SK-N-SH (cell line): ENCODE measurements at regions of chr4 and their contacts with region 1.

Region 1: DNA sequence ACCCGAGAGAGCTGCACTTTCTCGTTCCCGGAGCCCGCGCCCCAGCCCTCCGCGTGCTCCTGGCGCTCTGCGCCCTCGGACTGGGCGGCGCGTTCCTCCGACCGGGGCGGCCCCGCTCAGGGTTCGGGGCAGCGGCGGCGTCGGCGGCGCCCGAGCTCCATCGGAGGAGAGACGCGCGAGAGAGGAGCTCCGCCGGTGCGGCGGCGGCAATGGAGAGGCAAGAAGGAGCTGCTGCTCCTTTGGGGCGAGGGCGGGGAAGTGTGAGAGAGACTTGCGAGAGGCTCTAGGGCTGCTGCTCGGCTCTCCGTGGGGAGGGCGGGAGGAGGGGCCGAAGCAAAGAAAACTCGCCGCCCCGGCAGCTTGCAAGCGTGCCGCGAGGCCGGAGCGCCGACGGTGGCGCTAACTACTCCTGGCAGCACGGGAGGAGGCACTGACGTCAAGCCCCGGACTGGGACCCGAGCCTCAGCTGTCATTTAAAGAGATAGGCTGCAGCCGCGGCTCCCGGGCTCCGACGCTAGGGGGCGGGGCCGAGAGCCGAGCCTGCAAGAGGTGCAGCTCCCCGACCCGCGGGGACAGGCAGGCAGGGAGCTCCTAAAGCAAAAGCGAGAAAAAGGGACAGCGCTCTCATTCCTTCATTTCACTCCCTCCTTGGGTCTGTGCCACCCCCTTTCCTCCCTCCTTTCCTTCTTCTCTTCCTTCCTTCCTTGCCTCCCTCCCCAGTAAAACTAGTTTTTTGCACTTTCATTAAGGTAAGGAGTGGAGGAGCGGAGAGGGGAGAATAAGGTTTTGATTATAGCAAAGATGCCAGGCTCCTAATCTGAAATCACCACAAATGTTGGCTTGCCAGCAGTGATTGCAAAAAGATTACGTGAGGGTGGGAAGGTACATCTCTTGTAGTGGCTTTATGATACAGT is at the start of gene KCTD8:
- DNase-seq: peak; percentile 88
- H3K4me3 ChIP-seq: peak within 1 kb of the TSS; percentile 33 to 64
- H3K27ac ChIP-seq: no peak within 1 kb of the TSS
- H3K4me1 ChIP-seq: peaks cover 0 to 9% of the 10 kb centered on the region in 2 experiments; a peak in 2 of 4 replicates
- H3K27me3 ChIP-seq: peaks cover 32% of the 10 kb centered on the region
- CTCF ChIP-seq: peak; percentile 70
- EP300 ChIP-seq: no peak
- RAD21 ChIP-seq: peak; percentile 25; the same call in 1 of the 2 replicates
- polyA plus RNA-seq, gene KCTD8: not detected in 2 replicates

Region 2: GRCh38 chr4:44425614-44426208 is 23.1 kb before region 1 on chr4:
- CTCF ChIA-PET with region 1: interaction called, 16 read pairs
- POLR2A ChIA-PET with region 1: no interaction called
- DNase-seq: peak; percentile 2
- H3K4me3 ChIP-seq: no peak overlapping the region; a peak in 1 of 4 replicates
- H3K27ac ChIP-seq: no peak overlapping the region
- H3K4me1 ChIP-seq: no peaks in the 10 kb centered on the region
- H3K27me3 ChIP-seq: no peaks in the 10 kb centered on the region
- CTCF ChIP-seq: peak; percentile 63
- EP300 ChIP-seq: no peak
- RAD21 ChIP-seq: peak; percentile 60

Region 3: DNA sequence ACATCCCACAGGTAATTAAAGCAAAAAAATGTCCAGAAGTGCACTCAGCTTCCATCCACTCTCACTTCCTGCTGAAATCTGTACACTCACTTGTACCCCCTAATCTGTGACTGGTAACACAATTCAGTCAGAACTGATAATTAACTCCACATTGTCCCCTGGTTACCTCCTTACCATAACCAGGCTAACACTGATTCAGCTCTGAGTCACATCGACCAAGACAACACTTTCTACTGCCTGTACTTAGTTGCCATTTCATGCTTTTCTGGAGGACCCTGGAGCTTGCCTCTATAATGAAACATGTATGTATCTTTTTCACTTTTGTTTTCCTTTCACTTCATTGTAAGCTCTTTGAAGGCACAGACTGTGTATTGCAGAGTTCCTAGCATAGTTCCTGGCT is 1806.0 kb after region 1 on chr4:
- CTCF ChIA-PET with region 1: no interaction called
- POLR2A ChIA-PET with region 1: no interaction called
- DNase-seq: no peak
- H3K4me3 ChIP-seq: no peak overlapping the region
- H3K27ac ChIP-seq: no peak overlapping the region
- H3K4me1 ChIP-seq: peaks cover 0 to 3% of the 10 kb centered on the region in 2 experiments; a peak in 1 of 4 replicates
- H3K27me3 ChIP-seq: no peaks in the 10 kb centered on the region
- CTCF ChIP-seq: no peak
- EP300 ChIP-seq: no peak
- RAD21 ChIP-seq: no peak